ENCODE measurements at regions of chr2 and their contacts with region 1.

Region 1: GRCh38 chr2:161217597-161218185 is 57.5 kb downstream of the TANK start:
- DNase-seq: no peak
- ATAC-seq: no peak
- H3K4me3 ChIP-seq: no peak overlapping the region
- H3K4me3 Mint-ChIP-seq: no peak overlapping the region
- H3K27ac ChIP-seq: no peak overlapping the region
- H3K27ac Mint-ChIP-seq: peak overlapping the region in 6 of 9 donors; percentile 1 to 45 (median 30)
- H3K4me1 ChIP-seq: no peaks in the 10 kb centered on the region
- H3K4me1 Mint-ChIP-seq: peaks cover 0 to 32% (median 13%) of the 10 kb centered on the region in 7 donors
- H3K27me3 ChIP-seq: no peaks in the 10 kb centered on the region
- H3K27me3 Mint-ChIP-seq: no peaks in the 10 kb centered on the region

Region 2: GRCh38 chr2:160695402-160696086 is 522.1 kb before region 1 on chr2:
- CTCF ChIA-PET with region 1: no interaction called
- POLR2A ChIA-PET with region 1: no interaction called
- intact Hi-C with region 1: no loop called
- DNase-seq: no peak
- ATAC-seq: no peak
- H3K4me3 ChIP-seq: no peak overlapping the region
- H3K4me3 Mint-ChIP-seq: no peak overlapping the region
- H3K27ac ChIP-seq: no peak overlapping the region
- H3K27ac Mint-ChIP-seq: no peak overlapping the region
- H3K4me1 ChIP-seq: no peaks in the 10 kb centered on the region
- H3K4me1 Mint-ChIP-seq: no peaks in the 10 kb centered on the region
- H3K27me3 ChIP-seq: no peaks in the 10 kb centered on the region
- H3K27me3 Mint-ChIP-seq: peaks cover 0 to 4% (median 0%) of the 10 kb centered on the region in 5 donors

Region 3: GRCh38 chr2:161004379-161004778 is 213.3 kb before region 1 on chr2:
- CTCF ChIA-PET with region 1: no interaction called
- POLR2A ChIA-PET with region 1: no interaction called
- intact Hi-C with region 1: no loop called
- DNase-seq: no peak
- ATAC-seq: no peak
- H3K4me3 ChIP-seq: no peak overlapping the region
- H3K4me3 Mint-ChIP-seq: no peak overlapping the region
- H3K27ac ChIP-seq: no peak overlapping the region
- H3K27ac Mint-ChIP-seq: no peak overlapping the region
- H3K4me1 ChIP-seq: no peaks in the 10 kb centered on the region
- H3K4me1 Mint-ChIP-seq: peaks cover 0 to 7% (median 0%) of the 10 kb centered on the region in 7 donors
- H3K27me3 ChIP-seq: no peaks in the 10 kb centered on the region
- H3K27me3 Mint-ChIP-seq: peaks cover 7 to 20% (median 14%) of the 10 kb centered on the region in 5 donors

Region 4: DNA sequence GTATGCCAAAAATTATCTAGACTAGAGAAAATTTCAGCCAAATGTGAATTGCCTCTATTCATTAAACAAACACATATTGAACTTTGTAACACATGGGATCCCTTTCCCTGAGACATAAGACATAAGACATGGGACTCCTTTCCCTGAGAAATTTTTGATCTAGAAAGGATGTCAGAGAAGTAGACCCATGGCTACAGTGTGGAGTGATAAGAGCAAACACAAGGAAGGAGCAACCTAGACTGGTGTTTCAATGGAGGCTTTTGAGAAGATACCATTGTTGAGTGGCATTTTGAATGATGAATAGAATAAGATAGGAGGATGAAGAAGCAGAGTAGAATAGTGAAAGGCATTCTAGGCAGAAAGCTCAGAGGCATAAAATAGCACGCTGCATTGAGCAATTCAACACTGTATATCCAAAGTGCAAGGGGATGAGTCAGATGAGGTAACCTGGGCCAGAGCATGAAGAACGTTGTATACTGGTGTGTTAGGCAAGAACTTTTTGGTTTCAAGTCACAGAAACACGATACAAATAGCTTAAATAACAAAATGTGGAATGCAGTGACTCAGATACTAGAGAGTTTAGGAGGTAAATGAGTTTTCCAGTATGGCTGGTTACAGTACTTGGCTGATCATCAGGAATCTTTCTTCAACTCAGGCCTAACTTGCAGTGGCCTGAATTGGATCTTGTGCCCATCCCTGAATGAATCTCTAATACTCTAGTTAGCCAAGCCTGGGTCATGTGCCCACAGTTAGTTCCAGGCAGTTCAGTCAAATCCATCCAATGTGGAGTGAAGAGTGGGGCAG is 187.2 kb before region 1 on chr2:
- CTCF ChIA-PET with region 1: no interaction called
- POLR2A ChIA-PET with region 1: no interaction called
- intact Hi-C with region 1: no loop called
- DNase-seq: no peak
- ATAC-seq: no peak
- H3K4me3 ChIP-seq: no peak overlapping the region
- H3K4me3 Mint-ChIP-seq: no peak overlapping the region
- H3K27ac ChIP-seq: no peak overlapping the region
- H3K27ac Mint-ChIP-seq: no peak overlapping the region
- H3K4me1 ChIP-seq: no peaks in the 10 kb centered on the region
- H3K4me1 Mint-ChIP-seq: peaks cover 0 to 5% (median 5%) of the 10 kb centered on the region in 7 donors
- H3K27me3 ChIP-seq: no peaks in the 10 kb centered on the region
- H3K27me3 Mint-ChIP-seq: peaks cover 0 to 5% (median 2%) of the 10 kb centered on the region in 5 donors

Region 5: GRCh38 chr2:161199912-161200701 is 17.6 kb before region 1 on chr2:
- CTCF ChIA-PET with region 1: interaction called, 3 read pairs
- POLR2A ChIA-PET with region 1: no interaction called
- intact Hi-C with region 1: loop called in 1 of 2 experiments (anchors 2 kb)
- DNase-seq: no peak
- ATAC-seq: peak; percentile 41
- H3K4me3 ChIP-seq: no peak overlapping the region
- H3K4me3 Mint-ChIP-seq: peak overlapping the region in 5 of 10 donors; percentile 2 to 47 (median 39)
- H3K27ac ChIP-seq: no peak overlapping the region
- H3K27ac Mint-ChIP-seq: peak overlapping the region; percentile 2 to 85 (median 44)
- H3K4me1 ChIP-seq: peaks cover 0 to 16% of the 10 kb centered on the region in 2 donors
- H3K4me1 Mint-ChIP-seq: peaks cover 28 to 54% (median 43%) of the 10 kb centered on the region in 7 donors
- H3K27me3 ChIP-seq: no peaks in the 10 kb centered on the region
- H3K27me3 Mint-ChIP-seq: no peaks in the 10 kb centered on the region

Region 6: GRCh38 chr2:161273038-161273760 is 55.5 kb after region 1 on chr2:
- CTCF ChIA-PET with region 1: interaction called, 79 read pairs
- POLR2A ChIA-PET with region 1: no interaction called
- intact Hi-C with region 1: no loop called
- DNase-seq: peak in 7 of 9 donors; percentile 26 to 65 (median 58)
- ATAC-seq: peak; percentile 80
- H3K4me3 ChIP-seq: no peak overlapping the region
- H3K4me3 Mint-ChIP-seq: no peak overlapping the region
- H3K27ac ChIP-seq: no peak overlapping the region
- H3K27ac Mint-ChIP-seq: no peak overlapping the region
- H3K4me1 ChIP-seq: no peaks in the 10 kb centered on the region
- H3K4me1 Mint-ChIP-seq: peaks cover 0 to 3% (median 0%) of the 10 kb centered on the region in 7 donors
- H3K27me3 ChIP-seq: no peaks in the 10 kb centered on the region
- H3K27me3 Mint-ChIP-seq: peaks cover 4 to 27% (median 5%) of the 10 kb centered on the region in 5 donors